GM10248 (cell line): ENCODE measurements at regions of chr2 and their contacts with region 1.

Region 1: DNA sequence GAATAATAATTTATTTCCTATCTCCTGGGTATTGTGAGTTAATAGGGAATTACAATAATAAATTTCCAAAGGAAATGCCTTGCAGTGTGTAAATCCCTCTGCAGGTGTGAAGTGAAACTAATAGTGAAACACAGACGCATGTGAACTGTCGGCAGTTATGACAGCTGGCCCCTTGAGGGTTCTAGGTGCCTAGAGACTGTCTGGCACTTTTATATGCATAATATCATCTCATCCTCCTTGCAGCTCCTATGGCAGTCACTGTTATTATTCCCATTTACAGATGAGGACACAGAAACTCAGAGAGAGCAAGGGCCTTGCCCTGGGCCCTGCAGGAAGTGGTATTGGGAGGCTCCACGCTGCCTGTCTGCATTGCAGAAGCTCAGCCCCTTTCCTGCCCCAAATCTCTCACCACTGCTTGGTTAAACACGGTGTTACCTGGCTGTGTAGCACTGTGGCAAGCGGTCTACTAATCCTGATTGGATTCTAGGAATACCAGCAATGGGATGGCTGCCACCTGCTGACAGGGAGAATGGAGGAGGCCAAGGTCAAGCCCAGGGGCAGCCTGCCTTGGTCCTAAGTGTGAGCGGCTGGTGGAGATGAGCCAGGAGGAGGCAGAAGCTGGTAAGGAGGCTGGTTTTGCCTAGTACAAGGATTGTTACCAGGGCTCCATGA is 32.8 kb upstream of the ACKR3 start:
- DNase-seq: peak; percentile 39
- CTCF ChIP-seq: no peak

Region 2: GRCh38 chr2:236526455-236527158 is 10.3 kb before region 1 on chr2:
- CTCF ChIA-PET with region 1: interaction called, 11 read pairs
- POLR2A ChIA-PET with region 1: no interaction called
- DNase-seq: no peak
- CTCF ChIP-seq: no peak

Region 3: DNA sequence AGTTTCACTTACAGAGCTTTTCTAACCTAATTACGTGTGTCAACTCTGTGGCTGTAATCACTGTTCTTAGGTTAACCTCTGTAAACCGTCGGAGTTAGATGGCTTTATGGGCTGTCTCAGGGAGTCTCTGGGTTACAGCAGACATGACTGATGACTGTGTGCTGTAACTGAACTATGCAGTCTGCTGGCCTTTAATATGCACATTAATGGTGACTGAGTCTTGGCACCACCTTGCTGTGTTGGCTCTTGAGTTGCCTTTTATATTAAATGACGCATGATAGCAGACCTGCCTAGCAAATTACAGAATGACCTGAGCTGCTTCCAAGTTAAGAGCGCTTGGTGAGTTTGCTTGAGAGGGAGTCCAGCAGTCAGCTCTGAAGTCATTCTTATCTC is 122.9 kb after region 1 on chr2:
- CTCF ChIA-PET with region 1: no interaction called
- POLR2A ChIA-PET with region 1: no interaction called
- DNase-seq: no peak
- CTCF ChIP-seq: no peak

Region 4: GRCh38 chr2:236748801-236749200 is 211.9 kb after region 1 on chr2:
- CTCF ChIA-PET with region 1: no interaction called
- POLR2A ChIA-PET with region 1: no interaction called
- DNase-seq: no peak
- CTCF ChIP-seq: no peak